Gastrocnemius medialis (tissue), 4 donors: ENCODE measurements at regions of chr12 and their contacts with region 1.

Region 1: GRCh38 chr12:68040450-68041075 is 51.3 kb downstream of the IFNG-AS1 start:
- DNase-seq: peak in 1 of 2 donors; percentile 54
- ATAC-seq: peak; percentile 89 to 94
- H3K4me3 ChIP-seq: no peak overlapping the region
- H3K27ac ChIP-seq: no peak overlapping the region
- H3K4me1 ChIP-seq: no peaks in the 10 kb centered on the region
- H3K27me3 ChIP-seq: no peaks in the 10 kb centered on the region
- CTCF ChIP-seq: peak; percentile 57 to 83 (median 70)
- POLR2A ChIP-seq: no peak

Region 2: GRCh38 chr12:67991158-67991557 is 49.4 kb before region 1 on chr12:
- in situ Hi-C with region 1: no loop called
- intact Hi-C with region 1: no loop called
- DNase-seq: no peak
- ATAC-seq: no peak
- H3K4me3 ChIP-seq: no peak overlapping the region
- H3K27ac ChIP-seq: no peak overlapping the region
- H3K4me1 ChIP-seq: no peaks in the 10 kb centered on the region
- H3K27me3 ChIP-seq: no peaks in the 10 kb centered on the region
- CTCF ChIP-seq: no peak
- POLR2A ChIP-seq: no peak

Region 3: DNA sequence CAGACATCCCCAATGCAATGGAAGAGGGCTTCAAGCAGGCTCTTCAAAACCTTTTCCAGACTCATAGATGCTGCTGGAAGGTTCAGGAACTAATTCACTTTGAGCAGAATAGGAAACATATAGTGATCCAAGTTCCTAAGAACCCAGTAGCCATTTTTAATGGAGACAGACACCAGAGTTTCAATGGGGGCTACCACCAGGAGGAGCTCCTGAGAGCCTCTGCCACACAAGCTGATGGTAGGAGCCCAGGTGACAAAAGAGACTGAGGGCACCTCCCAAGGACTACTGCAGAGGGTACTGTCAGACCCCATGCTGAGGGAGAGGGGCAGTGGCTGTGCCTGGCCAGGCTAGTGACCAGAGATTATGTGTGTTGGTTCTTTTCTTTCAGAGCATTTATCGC is 73.1 kb after region 1 on chr12:
- in situ Hi-C with region 1: no loop called
- intact Hi-C with region 1: no loop called
- DNase-seq: no peak
- ATAC-seq: no peak
- H3K4me3 ChIP-seq: no peak overlapping the region
- H3K27ac ChIP-seq: no peak overlapping the region
- H3K4me1 ChIP-seq: no peaks in the 10 kb centered on the region
- H3K27me3 ChIP-seq: no peaks in the 10 kb centered on the region
- CTCF ChIP-seq: no peak
- POLR2A ChIP-seq: no peak

Region 4: GRCh38 chr12:68158432-68158831 is 117.9 kb after region 1 on chr12:
- in situ Hi-C with region 1: no loop called
- intact Hi-C with region 1: loop called (anchors 2 kb)
- DNase-seq: no peak
- ATAC-seq: no peak
- H3K4me3 ChIP-seq: no peak overlapping the region
- H3K27ac ChIP-seq: no peak overlapping the region
- H3K4me1 ChIP-seq: no peaks in the 10 kb centered on the region
- H3K27me3 ChIP-seq: no peaks in the 10 kb centered on the region
- CTCF ChIP-seq: peak in 4 of 5 experiments; percentile 6 to 51 (median 28)
- POLR2A ChIP-seq: no peak

Region 5: GRCh38 chr12:68317047-68317667 is 276.6 kb after region 1 on chr12:
- in situ Hi-C with region 1: loop called in 3 of 4 experiments (anchors 10 to 25 kb)
- intact Hi-C with region 1: loop called (anchors 2 kb)
- DNase-seq: no peak
- ATAC-seq: no peak
- H3K4me3 ChIP-seq: no peak overlapping the region
- H3K27ac ChIP-seq: no peak overlapping the region
- H3K4me1 ChIP-seq: peaks cover 0 to 20% of the 10 kb centered on the region in 2 donors
- H3K27me3 ChIP-seq: no peaks in the 10 kb centered on the region
- CTCF ChIP-seq: peak; percentile 23 to 70 (median 52)
- POLR2A ChIP-seq: no peak